Activated CD4-positive, alpha-beta memory T cell treated with anti-CD3 and anti-CD28 coated beads, Interleukin-2, amount 10 ng/mL, durations not matched to agents 7 days and 5 days (primary cell): ENCODE measurements at regions of chr7 and their contacts with region 1.

Region 1: GRCh38 chr7:55534175-55534915 is 38.0 kb downstream of the VOPP1 start:
- DNase-seq: peak; percentile 81
- H3K4me3 Mint-ChIP-seq: peak overlapping the region; percentile 55
- H3K27ac Mint-ChIP-seq: peak overlapping the region; percentile 94
- H3K4me1 Mint-ChIP-seq: peaks cover 80% of the 10 kb centered on the region
- H3K27me3 Mint-ChIP-seq: no peaks in the 10 kb centered on the region

Region 2: GRCh38 chr7:55130395-55131141 is 403.8 kb before region 1 on chr7:
- CTCF ChIA-PET with region 1: no interaction called
- POLR2A ChIA-PET with region 1: no interaction called
- DNase-seq: no peak
- H3K4me3 Mint-ChIP-seq: no peak overlapping the region
- H3K27ac Mint-ChIP-seq: no peak overlapping the region
- H3K4me1 Mint-ChIP-seq: peaks cover 20% of the 10 kb centered on the region
- H3K27me3 Mint-ChIP-seq: peaks cover 8% of the 10 kb centered on the region

Region 3: DNA sequence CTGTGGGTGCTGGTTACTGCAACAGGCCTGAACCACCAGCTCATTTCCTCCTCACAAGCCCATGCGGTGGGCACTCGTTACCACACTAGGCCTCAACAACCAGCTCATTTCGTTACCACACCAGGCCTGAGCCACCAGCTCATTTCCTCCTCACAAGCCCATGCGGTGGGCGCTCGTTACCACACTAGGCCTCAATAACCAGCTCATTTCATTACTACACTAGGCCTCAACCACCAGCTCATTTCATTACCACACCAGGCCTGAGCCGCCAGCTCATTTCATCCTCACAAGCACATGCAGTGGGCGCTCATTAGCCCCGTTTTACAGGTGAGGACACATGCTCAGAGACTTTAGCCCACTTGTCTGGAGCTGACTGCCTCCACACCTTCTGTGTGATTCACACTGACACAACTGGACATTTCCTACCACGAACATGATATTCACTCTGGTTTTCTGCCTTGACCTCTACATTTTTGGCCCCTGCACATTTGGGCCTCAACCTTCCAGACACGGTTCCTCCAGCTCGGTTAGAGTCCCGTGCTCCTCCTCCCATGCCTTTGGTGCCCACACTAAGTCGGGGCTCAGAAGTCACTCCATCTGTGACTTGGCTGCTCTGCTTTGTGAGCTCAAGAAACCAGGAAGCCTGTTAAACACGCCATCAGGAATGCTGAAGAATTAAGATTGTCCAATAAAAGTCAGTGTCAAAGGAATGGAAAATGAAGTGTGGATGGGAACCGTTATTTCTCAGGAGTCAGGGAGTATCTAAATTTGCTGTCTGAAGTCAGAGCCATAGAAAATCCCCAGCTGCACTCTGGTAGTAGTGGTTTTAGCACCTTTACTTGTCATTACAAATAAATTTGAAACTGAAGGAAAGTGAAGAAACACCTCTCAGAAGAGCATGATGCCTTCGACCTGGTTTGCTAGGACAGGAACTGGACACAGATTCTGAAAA is 225.0 kb before region 1 on chr7:
- CTCF ChIA-PET with region 1: interaction called, 9 read pairs
- POLR2A ChIA-PET with region 1: interaction called, 57 read pairs
- DNase-seq: peak; percentile 88
- H3K4me3 Mint-ChIP-seq: peak overlapping the region; percentile 19
- H3K27ac Mint-ChIP-seq: peak overlapping the region; percentile 66
- H3K4me1 Mint-ChIP-seq: peaks cover 49% of the 10 kb centered on the region
- H3K27me3 Mint-ChIP-seq: peaks cover 57% of the 10 kb centered on the region

Region 4: DNA sequence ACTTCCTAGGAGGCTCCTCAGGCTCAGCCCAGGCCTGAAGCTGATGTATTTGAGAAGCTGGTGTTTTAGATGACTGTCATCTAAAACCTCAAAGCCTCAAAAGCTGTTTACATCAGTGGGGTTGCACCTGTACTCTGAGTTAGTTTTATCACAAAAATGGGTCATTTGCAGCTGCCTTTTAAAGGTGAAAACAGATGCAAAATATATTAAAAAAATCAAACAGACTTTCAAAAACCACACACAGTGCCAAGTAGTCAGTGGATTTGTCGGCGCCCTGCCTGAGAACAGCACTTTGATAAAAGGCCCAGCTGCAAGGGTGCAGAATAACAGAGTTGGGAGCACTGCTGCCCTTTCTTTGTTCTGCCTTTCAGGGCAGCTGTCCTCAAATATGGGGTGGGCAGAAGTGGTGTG is 65.1 kb before region 1 on chr7:
- CTCF ChIA-PET with region 1: interaction called, 4 read pairs
- POLR2A ChIA-PET with region 1: interaction called, 29 read pairs
- DNase-seq: no peak
- H3K4me3 Mint-ChIP-seq: no peak overlapping the region
- H3K27ac Mint-ChIP-seq: peak overlapping the region; percentile 40
- H3K4me1 Mint-ChIP-seq: peaks cover 31% of the 10 kb centered on the region
- H3K27me3 Mint-ChIP-seq: no peaks in the 10 kb centered on the region

Region 5: GRCh38 chr7:55546829-55547228 is 12.5 kb after region 1 on chr7:
- CTCF ChIA-PET with region 1: interaction called, 4 read pairs
- POLR2A ChIA-PET with region 1: interaction called, 12 read pairs
- DNase-seq: no peak
- H3K4me3 Mint-ChIP-seq: no peak overlapping the region
- H3K27ac Mint-ChIP-seq: no peak overlapping the region
- H3K4me1 Mint-ChIP-seq: peaks cover 22% of the 10 kb centered on the region
- H3K27me3 Mint-ChIP-seq: no peaks in the 10 kb centered on the region

Region 6: DNA sequence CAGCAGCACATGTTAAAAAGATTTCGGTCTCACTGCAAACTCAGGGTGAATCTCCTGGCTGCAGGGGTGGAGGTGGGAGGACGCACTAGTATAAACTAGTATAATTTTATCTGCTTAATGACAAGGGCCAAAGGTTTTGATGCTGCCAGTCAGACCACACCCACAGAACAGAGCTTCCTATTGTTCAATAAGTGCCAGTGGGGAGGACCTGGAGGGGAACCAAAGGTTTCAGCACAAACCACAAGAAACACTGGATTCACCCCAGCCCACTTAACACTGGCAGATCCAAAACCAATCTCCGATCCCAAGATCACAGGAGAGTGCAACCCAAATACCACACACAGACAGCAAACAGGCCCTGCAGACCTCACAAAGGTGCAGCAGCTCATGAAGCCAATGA is 31.3 kb after region 1 on chr7:
- CTCF ChIA-PET with region 1: no interaction called
- POLR2A ChIA-PET with region 1: interaction called, 88 read pairs
- DNase-seq: no peak
- H3K4me3 Mint-ChIP-seq: no peak overlapping the region
- H3K27ac Mint-ChIP-seq: no peak overlapping the region
- H3K4me1 Mint-ChIP-seq: peaks cover 64% of the 10 kb centered on the region
- H3K27me3 Mint-ChIP-seq: no peaks in the 10 kb centered on the region

Region 7: DNA sequence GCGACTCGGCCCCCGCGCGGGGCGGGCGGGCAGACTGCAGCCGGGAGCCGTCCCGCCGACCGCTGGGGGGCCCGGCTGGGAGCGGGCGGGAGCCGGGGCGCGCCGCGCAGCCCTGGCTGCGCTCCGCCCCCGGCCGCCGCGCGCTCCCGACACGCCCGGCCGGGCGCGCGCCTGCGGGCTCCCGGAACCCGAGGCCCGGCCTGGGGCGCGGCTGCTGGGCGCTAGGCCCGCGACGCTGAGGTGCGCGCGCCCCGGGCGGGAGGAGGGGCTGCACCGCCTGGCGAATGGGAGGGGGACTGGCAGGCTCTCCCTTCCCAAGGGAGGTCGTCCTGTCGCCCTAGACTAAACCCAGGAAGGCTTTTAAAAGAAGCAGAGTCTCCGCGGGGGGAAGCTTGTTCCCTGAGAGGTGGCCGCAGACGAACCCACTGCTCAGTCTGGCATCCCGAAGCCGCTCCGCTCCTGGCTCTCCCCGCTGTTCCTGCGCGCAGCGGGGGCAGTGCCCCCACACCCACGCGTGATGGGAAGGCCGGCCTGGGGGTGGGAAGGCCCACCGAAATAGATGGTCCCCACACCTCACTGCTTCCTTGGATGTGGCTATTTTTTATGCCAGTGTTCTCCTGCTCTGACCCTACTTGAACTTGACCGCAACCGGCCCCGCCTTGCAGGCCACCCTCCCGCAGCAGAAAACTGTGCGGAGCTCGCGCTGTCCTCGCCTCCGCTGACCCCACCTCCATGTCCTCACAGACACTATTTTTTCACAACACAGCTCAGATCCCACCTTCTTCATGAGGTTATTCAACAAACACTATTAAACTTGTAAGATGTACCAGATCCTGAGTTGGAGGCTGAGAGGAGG is 38.3 kb after region 1 on chr7 and contains the start of gene VOPP1:
- CTCF ChIA-PET with region 1: interaction called, 6 read pairs
- POLR2A ChIA-PET with region 1: interaction called, 88 read pairs
- DNase-seq: peak; percentile 59
- H3K4me3 Mint-ChIP-seq: peak within 1 kb of the TSS; percentile 86
- H3K27ac Mint-ChIP-seq: peak within 1 kb of the TSS; percentile 79
- H3K4me1 Mint-ChIP-seq: peaks cover 68% of the 10 kb centered on the region
- H3K27me3 Mint-ChIP-seq: no peaks in the 10 kb centered on the region
- total RNA-seq, gene VOPP1: 51.4 to 52.7 TPM

Region 8: GRCh38 chr7:55794527-55794926 is 260.2 kb after region 1 on chr7:
- CTCF ChIA-PET with region 1: no interaction called
- POLR2A ChIA-PET with region 1: no interaction called
- DNase-seq: no peak
- H3K4me3 Mint-ChIP-seq: no peak overlapping the region
- H3K27ac Mint-ChIP-seq: no peak overlapping the region
- H3K4me1 Mint-ChIP-seq: no peaks in the 10 kb centered on the region
- H3K27me3 Mint-ChIP-seq: no peaks in the 10 kb centered on the region